PC-3 (cell line): ENCODE measurements at regions of chr3 and their contacts with region 1.

Region 1: DNA sequence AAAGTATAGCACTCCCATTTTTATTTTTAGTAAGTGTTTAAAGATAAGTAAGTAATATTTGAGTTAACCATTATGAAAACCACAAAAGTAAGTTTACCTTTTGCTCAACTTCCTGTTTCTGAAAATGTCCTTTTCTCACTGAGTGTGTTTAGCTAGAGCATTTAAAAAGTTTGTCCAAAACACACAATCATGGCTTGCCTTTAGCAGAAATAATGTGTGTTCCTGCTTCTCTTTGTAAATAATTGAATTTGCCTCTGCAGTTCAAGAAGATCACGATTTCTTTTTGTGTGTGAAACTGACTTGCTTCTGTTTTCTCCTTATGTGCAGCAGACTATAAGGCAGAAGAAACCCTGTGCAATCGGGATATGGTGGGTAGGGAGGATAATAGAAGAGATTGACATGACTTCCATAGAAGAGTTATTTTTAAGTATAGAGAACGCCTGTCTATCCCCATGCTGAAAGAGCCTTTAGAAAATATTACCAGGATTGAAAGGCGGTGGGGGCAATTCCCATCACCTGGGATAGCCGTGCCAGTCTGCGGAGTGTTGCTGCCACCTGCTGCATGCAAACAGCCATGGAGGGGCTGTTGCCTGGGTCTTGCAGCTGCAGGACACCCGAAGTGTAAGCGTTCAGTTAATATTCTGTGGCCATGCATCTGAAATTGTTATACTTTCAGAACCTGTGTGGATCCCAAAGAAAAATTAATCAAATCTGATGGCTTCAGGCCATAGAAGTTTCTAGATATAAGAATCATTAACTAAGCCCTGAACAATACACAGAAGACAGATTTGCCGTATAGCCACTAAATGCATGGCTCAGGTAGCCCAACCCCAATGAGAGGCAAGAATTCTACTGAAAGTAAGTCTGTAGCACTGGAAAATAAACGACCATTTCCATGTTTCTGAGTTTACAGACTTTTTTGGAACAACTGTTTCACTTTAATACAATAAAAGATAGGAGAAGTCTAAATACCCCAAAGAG is 2.4 kb upstream of the CD96 start:
- DNase-seq: peak; percentile 89
- ATAC-seq: peak; percentile 81
- H3K4me3 ChIP-seq: peak overlapping the region; percentile 49
- H3K27ac ChIP-seq: peak overlapping the region; percentile 82
- H3K4me1 ChIP-seq: peaks cover 32% of the 10 kb centered on the region
- H3K27me3 ChIP-seq: no peaks in the 10 kb centered on the region
- CTCF ChIP-seq: peak; percentile 99

Region 2: DNA sequence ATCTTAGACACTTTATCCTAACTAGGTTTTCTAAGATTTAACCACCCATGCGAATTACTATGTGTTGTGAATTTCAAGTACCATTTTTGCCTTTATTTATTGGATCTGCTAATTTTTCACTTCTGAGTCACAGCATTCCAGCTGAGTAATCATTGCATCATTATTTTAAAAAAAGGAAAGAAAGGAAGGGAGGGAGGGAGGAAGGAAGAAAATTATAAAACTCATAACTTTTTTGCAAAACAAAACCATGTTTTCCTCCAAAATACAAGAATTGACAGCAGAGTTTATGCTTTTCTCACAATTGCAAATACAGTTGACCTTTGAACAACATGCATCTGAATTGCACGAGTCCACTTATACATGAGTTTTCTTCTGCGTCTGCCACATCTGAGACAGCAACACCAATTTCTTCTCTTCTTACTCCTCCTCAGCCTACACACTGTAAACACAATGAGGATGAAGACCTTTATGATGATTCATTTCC is 1119.4 kb before region 1 on chr3:
- CTCF ChIA-PET with region 1: no interaction called
- POLR2A ChIA-PET with region 1: no interaction called
- intact Hi-C with region 1: loop called (anchors 1 kb)
- DNase-seq: peak; percentile 94
- ATAC-seq: peak; percentile 93
- H3K4me3 ChIP-seq: peak overlapping the region; percentile 58
- H3K27ac ChIP-seq: peak overlapping the region; percentile 74
- H3K4me1 ChIP-seq: peaks cover 31% of the 10 kb centered on the region
- H3K27me3 ChIP-seq: no peaks in the 10 kb centered on the region
- CTCF ChIP-seq: no peak

Region 3: DNA sequence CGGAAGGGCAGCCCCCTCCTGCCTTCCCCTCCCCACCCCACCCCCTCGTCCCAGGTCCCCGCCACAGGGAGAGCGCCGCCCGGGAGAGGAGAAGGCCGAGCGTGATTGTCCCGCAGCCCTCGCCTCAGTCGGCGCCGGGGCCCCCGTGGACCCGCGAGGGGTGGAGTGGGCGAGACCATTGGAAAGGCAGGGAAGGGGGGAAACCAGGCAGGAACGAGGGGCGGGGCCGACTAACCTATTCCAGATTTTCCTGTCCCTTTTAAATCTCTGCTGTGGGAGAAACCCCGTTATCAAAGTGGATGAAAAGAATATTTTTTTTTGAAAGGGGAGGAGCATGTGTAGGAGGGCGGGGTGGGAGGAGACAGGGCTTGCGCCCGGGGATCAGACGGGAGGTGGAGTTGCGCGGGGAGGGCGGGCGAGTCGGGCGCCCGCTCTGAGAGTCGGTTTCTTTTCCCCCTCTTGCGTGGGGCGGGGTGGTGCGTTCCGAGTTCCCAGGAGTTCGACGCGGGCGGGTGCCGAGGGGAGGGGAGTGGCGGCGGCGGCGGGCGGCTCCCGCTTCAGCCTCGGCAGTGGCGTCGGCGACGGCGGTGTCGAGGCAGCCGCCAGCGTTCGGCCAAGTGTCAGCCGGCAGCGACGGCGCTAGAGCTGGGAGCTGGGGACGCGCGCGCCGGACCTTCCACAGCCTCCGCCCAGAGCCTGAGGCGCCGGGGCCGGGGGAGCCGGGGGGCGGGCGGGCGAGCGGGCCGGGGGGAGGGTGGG is 468.2 kb before region 1 on chr3 and contains the start of gene NECTIN3:
- CTCF ChIA-PET with region 1: interaction called, 5 read pairs
- POLR2A ChIA-PET with region 1: no interaction called
- intact Hi-C with region 1: loop called (anchors 1 kb)
- DNase-seq: peak; percentile 96
- ATAC-seq: peak; percentile 78
- H3K4me3 ChIP-seq: peak within 1 kb of the TSS; percentile 99
- H3K27ac ChIP-seq: peak within 1 kb of the TSS; percentile 52
- H3K4me1 ChIP-seq: peaks cover 16% of the 10 kb centered on the region
- H3K27me3 ChIP-seq: no peaks in the 10 kb centered on the region
- CTCF ChIP-seq: no peak
- total RNA-seq, gene NECTIN3: 12.8 and 15.8 TPM in 2 replicates

Region 4: GRCh38 chr3:111210003-111210711 is 329.5 kb before region 1 on chr3:
- CTCF ChIA-PET with region 1: no interaction called
- POLR2A ChIA-PET with region 1: no interaction called
- intact Hi-C with region 1: loop called (anchors 10 kb)
- DNase-seq: peak; percentile 62
- ATAC-seq: peak; percentile 71
- H3K4me3 ChIP-seq: no peak overlapping the region
- H3K27ac ChIP-seq: no peak overlapping the region
- H3K4me1 ChIP-seq: 0 out of 2 replicates have a peak, but pooled peaks cover 4% of the 10 kb centered on the region
- H3K27me3 ChIP-seq: no peaks in the 10 kb centered on the region
- CTCF ChIP-seq: peak; percentile 43

Region 5: GRCh38 chr3:111338059-111338698 is 201.5 kb before region 1 on chr3:
- CTCF ChIA-PET with region 1: no interaction called
- POLR2A ChIA-PET with region 1: no interaction called
- intact Hi-C with region 1: loop called (anchors 1 kb)
- DNase-seq: peak; percentile 92
- ATAC-seq: peak; percentile 89
- H3K4me3 ChIP-seq: no peak overlapping the region
- H3K27ac ChIP-seq: no peak overlapping the region
- H3K4me1 ChIP-seq: peaks cover 19% of the 10 kb centered on the region
- H3K27me3 ChIP-seq: no peaks in the 10 kb centered on the region
- CTCF ChIP-seq: peak; percentile 98

Region 6: DNA sequence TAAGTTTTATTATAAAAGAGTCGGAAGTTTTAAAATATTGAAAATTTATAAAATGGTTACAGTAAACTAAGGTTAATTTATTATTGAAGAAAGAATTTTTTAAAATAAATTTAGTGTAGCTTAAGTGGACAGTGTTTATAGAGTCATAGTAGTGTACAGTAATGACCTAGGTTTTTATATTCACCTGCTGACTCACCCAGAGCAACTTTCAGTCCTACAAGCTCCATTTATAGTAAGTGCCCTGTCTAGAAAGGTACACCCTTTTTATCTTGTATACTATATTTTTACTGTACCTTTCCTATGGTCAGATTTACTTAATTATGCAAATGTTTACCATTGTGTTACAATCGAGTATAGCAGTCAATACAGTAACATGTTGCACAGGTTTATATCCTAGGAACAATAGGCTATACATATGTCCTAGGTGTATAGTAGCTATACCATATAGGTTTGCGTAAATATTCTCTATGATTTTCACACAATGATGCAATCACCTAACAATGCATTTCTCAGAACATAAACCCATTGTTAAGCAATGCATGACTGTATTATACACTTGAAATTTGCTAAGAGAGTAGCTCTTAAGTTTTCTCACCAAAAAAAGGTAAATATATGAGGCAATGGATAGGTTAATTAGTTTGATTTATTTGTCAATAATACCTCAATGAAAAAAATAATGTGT is 104.6 kb before region 1 on chr3:
- CTCF ChIA-PET with region 1: no interaction called
- POLR2A ChIA-PET with region 1: no interaction called
- intact Hi-C with region 1: loop called (anchors 2 kb)
- DNase-seq: peak; percentile 3
- ATAC-seq: peak; percentile 69
- H3K4me3 ChIP-seq: no peak overlapping the region
- H3K27ac ChIP-seq: no peak overlapping the region
- H3K4me1 ChIP-seq: no peaks in the 10 kb centered on the region
- H3K27me3 ChIP-seq: no peaks in the 10 kb centered on the region
- CTCF ChIP-seq: no peak

Region 7: GRCh38 chr3:111506435-111506834 is 33.2 kb before region 1 on chr3:
- CTCF ChIA-PET with region 1: no interaction called
- POLR2A ChIA-PET with region 1: no interaction called
- intact Hi-C with region 1: no loop called
- DNase-seq: no peak
- ATAC-seq: no peak
- H3K4me3 ChIP-seq: no peak overlapping the region
- H3K27ac ChIP-seq: no peak overlapping the region
- H3K4me1 ChIP-seq: no peaks in the 10 kb centered on the region
- H3K27me3 ChIP-seq: no peaks in the 10 kb centered on the region
- CTCF ChIP-seq: no peak

Region 8: GRCh38 chr3:111676211-111677006 is 136.8 kb after region 1 on chr3:
- CTCF ChIA-PET with region 1: no interaction called
- POLR2A ChIA-PET with region 1: no interaction called
- intact Hi-C with region 1: no loop called
- DNase-seq: peak; percentile 99
- ATAC-seq: peak; percentile 76
- H3K4me3 ChIP-seq: peak overlapping the region; percentile 87
- H3K27ac ChIP-seq: peak overlapping the region; percentile 86
- H3K4me1 ChIP-seq: peaks cover 53% of the 10 kb centered on the region
- H3K27me3 ChIP-seq: no peaks in the 10 kb centered on the region
- CTCF ChIP-seq: no peak